ENCODE measurements at regions of chr5 and their contacts with region 1.

Region 1: GRCh38 chr5:58235299-58235698 is 224.6 kb downstream of the PLK2 start:
- DNase-seq: peak in 1 of 2 experiments; percentile 35
- H3K4me3 ChIP-seq: no peak overlapping the region
- H3K4me3 Mint-ChIP-seq: no peak overlapping the region
- H3K27ac Mint-ChIP-seq: no peak overlapping the region
- H3K4me1 ChIP-seq: 0 out of 2 replicates have a peak, but pooled peaks cover 7% of the 10 kb centered on the region
- H3K4me1 Mint-ChIP-seq: peaks cover 7% of the 10 kb centered on the region
- H3K27me3 ChIP-seq: no peaks in the 10 kb centered on the region
- H3K27me3 Mint-ChIP-seq: no peaks in the 10 kb centered on the region
- CTCF ChIP-seq: no peak

Region 2: DNA sequence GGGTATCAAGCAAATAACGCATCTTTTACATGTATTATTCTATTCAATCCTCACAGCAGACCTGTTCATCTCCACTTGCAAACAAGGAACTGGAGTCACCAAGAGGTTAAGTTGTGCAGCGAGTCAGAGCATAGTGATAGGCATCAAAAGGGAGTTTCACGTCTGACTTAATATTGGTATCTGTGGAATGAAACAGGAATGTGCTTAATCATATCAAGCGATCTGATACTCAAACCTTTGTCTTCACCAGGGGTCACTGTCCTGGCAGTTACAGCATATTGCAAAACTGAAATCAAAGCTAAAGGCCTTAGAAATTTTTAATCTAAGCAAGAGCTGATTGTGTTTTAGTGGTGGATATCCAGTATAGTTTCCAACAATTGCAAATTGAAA is 47.0 kb before region 1 on chr5:
- CTCF ChIA-PET with region 1: no interaction called
- POLR2A ChIA-PET with region 1: no interaction called
- intact Hi-C with region 1: loop called (anchors 1 kb)
- DNase-seq: peak; percentile 67 to 76
- H3K4me3 ChIP-seq: no peak overlapping the region
- H3K4me3 Mint-ChIP-seq: no peak overlapping the region
- H3K27ac Mint-ChIP-seq: peak overlapping the region; percentile 72
- H3K4me1 ChIP-seq: peaks cover 40% of the 10 kb centered on the region
- H3K4me1 Mint-ChIP-seq: peaks cover 11% of the 10 kb centered on the region
- H3K27me3 ChIP-seq: no peaks in the 10 kb centered on the region
- H3K27me3 Mint-ChIP-seq: no peaks in the 10 kb centered on the region
- CTCF ChIP-seq: no peak

Measured in Caco-2 (cell line).